Caco-2 (cell line): ENCODE measurements at regions of chr19 and their contacts with region 1.

Region 1: GRCh38 chr19:10717356-10718204 is at the start of gene DNM2:
- DNase-seq: peak; percentile 99
- H3K4me3 ChIP-seq: peak within 1 kb of the TSS; percentile 99
- H3K4me3 Mint-ChIP-seq: peak within 1 kb of the TSS; percentile 93
- H3K27ac Mint-ChIP-seq: peak within 1 kb of the TSS; percentile 76
- H3K4me1 ChIP-seq: 0 out of 2 replicates have a peak, but pooled peaks cover 5% of the 10 kb centered on the region
- H3K4me1 Mint-ChIP-seq: peaks cover 8% of the 10 kb centered on the region
- H3K27me3 ChIP-seq: no peaks in the 10 kb centered on the region
- H3K27me3 Mint-ChIP-seq: no peaks in the 10 kb centered on the region
- CTCF ChIP-seq: peak; percentile 60 to 74
- total RNA-seq, gene DNM2: 137 and 138 TPM in 2 replicates

Region 2: DNA sequence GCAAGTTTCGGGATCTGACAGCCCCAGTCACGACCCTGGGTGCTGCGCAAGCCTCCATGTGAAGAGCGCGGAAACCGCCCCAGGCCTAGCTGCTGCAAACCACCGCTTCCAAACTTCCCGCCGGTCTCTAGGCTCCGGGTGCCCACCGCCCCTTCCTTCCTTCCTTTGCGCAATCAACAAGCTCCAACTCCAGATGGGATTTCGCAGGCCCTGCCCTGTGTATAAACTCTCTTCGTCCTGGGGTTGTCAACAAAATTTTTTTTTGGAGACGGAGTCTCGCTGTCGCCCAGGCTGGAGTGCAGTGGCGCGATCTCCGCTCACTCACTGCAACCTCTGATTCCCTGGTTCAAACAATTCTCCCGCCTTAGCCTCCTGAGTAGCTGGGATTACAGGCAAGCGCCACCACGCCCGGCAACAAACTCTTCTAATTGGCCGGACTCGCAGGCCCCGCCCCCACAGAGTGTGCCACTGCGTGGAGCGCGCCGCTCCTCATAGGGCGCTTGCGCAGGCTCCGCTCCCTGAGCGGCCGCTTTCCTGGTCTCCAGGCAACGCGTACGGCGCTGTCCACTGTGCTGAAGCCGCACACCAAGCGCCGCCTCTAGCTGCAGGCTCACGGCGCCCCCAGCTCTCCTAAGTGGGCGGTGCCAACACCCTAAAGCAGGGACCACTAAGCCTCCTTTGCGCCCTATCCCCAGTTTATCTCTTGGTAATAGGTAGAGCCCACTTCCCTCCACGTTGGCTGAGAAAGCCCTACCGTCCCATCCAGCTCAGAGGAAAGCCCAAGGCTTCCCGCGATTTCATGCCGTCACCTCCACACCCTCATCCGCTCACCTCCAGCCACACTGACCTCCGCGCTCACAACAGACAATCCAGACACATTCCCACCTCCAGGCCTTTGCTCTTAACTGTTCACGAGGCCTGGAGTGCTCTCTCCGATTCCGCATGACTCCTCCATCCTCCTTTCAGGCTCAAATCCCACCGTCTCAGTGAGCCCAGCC is 21.9 kb before region 1 on chr19:
- CTCF ChIA-PET with region 1: interaction called, 10 read pairs
- POLR2A ChIA-PET with region 1: no interaction called
- intact Hi-C with region 1: no loop called
- DNase-seq: peak; percentile 95
- H3K4me3 ChIP-seq: peak overlapping the region; percentile 19
- H3K4me3 Mint-ChIP-seq: peak overlapping the region; percentile 64
- H3K27ac Mint-ChIP-seq: peak overlapping the region; percentile 49
- H3K4me1 ChIP-seq: peaks cover 6% of the 10 kb centered on the region; the same call in 1 of the 2 replicates
- H3K4me1 Mint-ChIP-seq: peaks cover 6% of the 10 kb centered on the region
- H3K27me3 ChIP-seq: no peaks in the 10 kb centered on the region
- H3K27me3 Mint-ChIP-seq: no peaks in the 10 kb centered on the region
- CTCF ChIP-seq: no peak

Region 3: DNA sequence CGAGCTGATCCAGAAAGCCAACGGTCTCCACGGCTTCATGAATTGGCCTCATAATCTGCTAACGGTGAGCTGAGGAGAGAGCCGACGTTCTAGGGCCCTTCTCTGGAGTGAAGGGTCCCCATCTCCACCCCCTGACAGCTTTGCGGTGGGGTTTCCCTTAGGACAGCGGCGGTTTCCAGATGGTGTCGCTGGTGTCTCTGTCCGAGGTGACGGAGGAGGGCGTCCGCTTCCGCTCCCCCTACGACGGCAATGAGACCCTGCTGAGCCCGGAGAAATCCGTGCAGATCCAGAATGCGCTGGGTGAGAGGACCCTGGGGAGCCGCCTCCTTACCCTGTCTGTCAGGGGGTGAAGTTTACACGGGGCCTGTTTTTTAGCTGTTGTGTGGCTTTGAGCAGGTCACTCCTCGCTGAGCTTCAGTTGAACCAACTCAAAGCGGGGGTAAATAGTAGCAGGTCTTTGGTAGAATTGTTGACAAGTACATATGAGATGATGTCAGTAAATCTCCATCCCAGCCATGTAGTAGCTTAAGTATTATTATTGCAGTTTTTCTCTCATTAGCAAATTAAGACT is 15.5 kb before region 1 on chr19:
- CTCF ChIA-PET with region 1: interaction called, 17 read pairs
- POLR2A ChIA-PET with region 1: interaction called, 6 read pairs
- intact Hi-C with region 1: loop called (anchors 1 kb)
- DNase-seq: no peak
- H3K4me3 ChIP-seq: peak overlapping the region; percentile 88
- H3K4me3 Mint-ChIP-seq: peak overlapping the region; percentile 93
- H3K27ac Mint-ChIP-seq: peak overlapping the region; percentile 86
- H3K4me1 ChIP-seq: peaks cover 5% of the 10 kb centered on the region; the same call in 1 of the 2 replicates
- H3K4me1 Mint-ChIP-seq: peaks cover 5% of the 10 kb centered on the region
- H3K27me3 ChIP-seq: no peaks in the 10 kb centered on the region
- H3K27me3 Mint-ChIP-seq: no peaks in the 10 kb centered on the region
- CTCF ChIP-seq: peak in 1 of 2 experiments; percentile 5

Region 4: DNA sequence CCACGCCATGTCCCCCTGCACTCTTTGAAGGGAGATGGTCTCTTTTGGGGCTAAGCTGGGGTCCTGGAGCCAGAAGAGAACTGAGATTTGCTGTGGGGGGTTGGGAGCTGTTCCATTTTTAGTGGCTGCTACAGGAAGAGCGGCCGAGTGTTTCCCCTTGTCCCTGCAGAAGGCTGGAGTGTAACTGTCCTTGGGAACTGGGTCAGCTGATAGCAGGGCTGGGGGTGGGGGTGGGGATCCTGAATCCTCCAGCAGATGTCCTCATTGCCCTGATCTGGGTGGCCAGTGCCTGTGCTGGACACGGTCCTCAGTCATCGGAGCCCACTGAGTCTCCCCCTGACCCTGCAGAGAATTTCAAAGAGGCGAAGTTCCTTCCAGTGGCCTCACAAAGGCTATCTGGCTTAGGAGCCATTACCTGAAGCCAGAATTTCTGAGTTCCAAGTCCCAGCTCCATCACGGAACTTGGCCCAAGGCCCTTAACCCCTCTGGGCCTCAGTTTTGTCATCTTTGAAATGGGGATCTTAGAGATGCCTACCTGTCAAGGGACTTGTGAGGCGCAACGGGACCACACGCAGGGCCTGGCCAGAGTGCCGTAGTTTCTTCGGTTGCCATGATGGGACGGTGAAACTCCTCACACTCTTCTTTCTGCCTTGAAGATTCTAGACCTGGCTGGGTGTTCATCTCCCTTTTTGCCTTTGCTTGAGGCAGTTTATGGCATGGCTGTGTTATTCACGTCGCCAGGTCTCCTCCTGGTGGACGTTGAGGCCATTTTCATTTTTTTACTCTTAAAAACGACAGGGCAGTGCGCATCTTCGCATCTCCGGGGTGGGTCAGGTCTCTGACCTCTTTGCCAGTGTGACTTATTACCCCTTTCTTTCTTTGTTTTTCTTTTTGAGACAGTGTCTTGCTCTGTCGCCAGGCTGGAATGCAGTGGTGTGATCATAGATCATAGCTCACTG is 52.2 kb after region 1 on chr19:
- CTCF ChIA-PET with region 1: interaction called, 7 read pairs
- POLR2A ChIA-PET with region 1: interaction called, 4 read pairs
- intact Hi-C with region 1: loop called (anchors 1 kb)
- DNase-seq: peak in 1 of 2 experiments; percentile 31
- H3K4me3 ChIP-seq: no peak overlapping the region
- H3K4me3 Mint-ChIP-seq: no peak overlapping the region
- H3K27ac Mint-ChIP-seq: peak overlapping the region; percentile 79
- H3K4me1 ChIP-seq: 0 out of 2 replicates have a peak, but pooled peaks cover 6% of the 10 kb centered on the region
- H3K4me1 Mint-ChIP-seq: peaks cover 7% of the 10 kb centered on the region
- H3K27me3 ChIP-seq: no peaks in the 10 kb centered on the region
- H3K27me3 Mint-ChIP-seq: no peaks in the 10 kb centered on the region
- CTCF ChIP-seq: peak in 1 of 2 experiments; percentile 40

Region 5: DNA sequence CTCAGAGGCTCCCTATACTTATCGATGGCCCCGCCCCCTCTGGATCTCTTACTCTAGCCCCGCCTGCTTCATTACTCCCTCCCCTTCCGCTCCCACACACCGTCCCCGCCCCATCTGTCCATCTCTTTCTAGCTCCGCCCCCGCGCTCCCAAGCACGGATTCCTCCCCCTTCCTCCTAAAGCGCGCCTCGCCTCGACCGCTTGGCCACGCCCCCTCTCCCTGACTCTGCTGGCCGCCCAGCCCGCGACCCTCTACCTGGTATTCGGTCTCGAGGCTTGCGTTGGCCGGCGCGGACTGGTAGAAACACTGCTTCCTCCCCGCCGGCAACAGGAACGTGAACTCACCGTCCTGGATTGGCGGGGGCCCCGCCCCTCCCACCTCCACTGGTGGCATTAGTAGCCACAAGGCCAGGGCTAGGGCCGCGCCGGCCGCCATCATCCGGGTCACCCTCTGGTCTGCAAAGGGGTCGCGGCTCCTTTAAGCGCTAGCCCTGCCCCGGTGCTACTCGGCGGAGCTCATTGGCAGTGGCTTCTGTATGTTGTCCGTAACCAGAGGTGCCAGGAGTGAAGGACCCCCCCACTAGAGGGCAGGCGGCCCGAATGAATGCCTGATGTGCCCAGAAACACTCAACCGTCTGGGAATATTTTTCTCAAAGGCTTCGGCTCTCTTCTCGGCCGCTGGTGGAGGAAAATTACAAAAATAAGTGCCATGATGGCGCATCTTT is 118.3 kb after region 1 on chr19 and contains the start of gene TMED1:
- CTCF ChIA-PET with region 1: interaction called, 20 read pairs
- POLR2A ChIA-PET with region 1: interaction called, 19 read pairs
- intact Hi-C with region 1: loop called (anchors 1 kb)
- DNase-seq: peak; percentile 99 to 100
- H3K4me3 ChIP-seq: peak within 1 kb of the TSS; percentile 58
- H3K4me3 Mint-ChIP-seq: peak within 1 kb of the TSS; percentile 98
- H3K27ac Mint-ChIP-seq: peak within 1 kb of the TSS; percentile 100
- H3K4me1 ChIP-seq: peaks cover 9% of the 10 kb centered on the region; the same call in 1 of the 2 replicates
- H3K4me1 Mint-ChIP-seq: no peaks in the 10 kb centered on the region
- H3K27me3 ChIP-seq: no peaks in the 10 kb centered on the region
- H3K27me3 Mint-ChIP-seq: no peaks in the 10 kb centered on the region
- CTCF ChIP-seq: peak in 1 of 2 experiments; percentile 13
- total RNA-seq, gene TMED1: 38.2 and 41.4 TPM in 2 replicates

Region 6: GRCh38 chr19:10864538-10864899 is 146.9 kb after region 1 on chr19:
- CTCF ChIA-PET with region 1: interaction called, 17 read pairs
- POLR2A ChIA-PET with region 1: interaction called, 4 read pairs
- intact Hi-C with region 1: loop called (anchors 1 kb)
- DNase-seq: peak; percentile 82 to 86
- H3K4me3 ChIP-seq: no peak overlapping the region
- H3K4me3 Mint-ChIP-seq: peak overlapping the region; percentile 0
- H3K27ac Mint-ChIP-seq: peak overlapping the region; percentile 13
- H3K4me1 ChIP-seq: peaks cover 11% of the 10 kb centered on the region; the same call in 1 of the 2 replicates
- H3K4me1 Mint-ChIP-seq: peaks cover 8% of the 10 kb centered on the region
- H3K27me3 ChIP-seq: no peaks in the 10 kb centered on the region
- H3K27me3 Mint-ChIP-seq: no peaks in the 10 kb centered on the region
- CTCF ChIP-seq: peak; percentile 79 to 93

Region 7: GRCh38 chr19:10968527-10969135 is 251.1 kb after region 1 on chr19:
- CTCF ChIA-PET with region 1: no interaction called
- POLR2A ChIA-PET with region 1: no interaction called
- intact Hi-C with region 1: no loop called
- DNase-seq: no peak
- H3K4me3 ChIP-seq: no peak overlapping the region
- H3K4me3 Mint-ChIP-seq: no peak overlapping the region
- H3K27ac Mint-ChIP-seq: no peak overlapping the region
- H3K4me1 ChIP-seq: peaks cover under 1% of the 10 kb centered on the region; the same call in 1 of the 2 replicates
- H3K4me1 Mint-ChIP-seq: peaks cover 6% of the 10 kb centered on the region
- H3K27me3 ChIP-seq: no peaks in the 10 kb centered on the region
- H3K27me3 Mint-ChIP-seq: no peaks in the 10 kb centered on the region
- CTCF ChIP-seq: no peak